Activated T-helper 1 cell treated with anti-CD3 and anti-CD28 coated beads, Interleukin-12 subunit alpha, Interleukin-12 subunit beta, Interleukin-2, Interleukin-4 antibody, amounts not matched to agents 30 ng/mL and 10 ng/mL and 1 ng/mL, durations not matched to agents 14 hours and 24 hours and 36 hours (primary cell): ENCODE measurements at regions of chr20 and their contacts with region 1.

Region 1: DNA sequence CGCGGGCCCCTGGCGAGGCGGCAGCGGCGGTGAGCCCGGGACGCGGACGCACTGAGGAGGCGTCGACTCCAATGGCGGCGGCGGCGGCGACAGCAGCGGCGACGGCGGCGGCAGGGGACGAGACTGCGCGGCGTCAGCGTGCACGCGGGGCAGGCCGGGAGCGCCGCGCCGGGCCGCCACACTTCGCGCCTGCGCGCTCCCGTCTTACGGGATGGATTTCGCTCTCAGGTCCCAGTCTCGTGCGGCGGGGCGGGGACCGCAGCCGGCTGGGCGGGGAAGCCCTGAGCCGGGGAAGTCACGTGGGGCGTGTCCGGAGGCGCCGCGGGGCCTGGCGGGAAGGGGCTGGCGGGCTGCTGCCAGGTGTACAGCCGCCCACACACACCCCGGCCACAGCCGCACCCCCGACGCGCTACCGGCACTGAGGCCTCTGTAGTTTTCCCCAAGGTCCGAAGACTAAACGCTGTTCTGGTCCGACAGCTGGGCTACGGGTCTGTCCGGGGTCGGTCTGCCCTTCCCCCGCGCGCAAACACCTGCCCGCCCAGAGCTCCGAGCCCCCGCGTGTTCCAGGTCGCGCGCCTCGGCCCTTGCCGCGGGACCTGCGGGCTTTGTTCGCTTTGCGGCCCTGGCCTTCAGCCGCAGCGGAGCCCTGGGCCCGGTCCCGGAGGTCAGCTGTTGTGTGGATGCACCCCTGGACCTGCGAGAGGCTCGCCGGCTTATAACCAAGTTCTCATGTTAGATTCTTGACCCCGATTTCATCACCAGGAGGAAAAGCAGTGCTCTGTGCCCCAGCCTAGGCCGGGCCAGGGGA is at the start of gene YTHDF1:
- DNase-seq: peak; percentile 97
- H3K4me3 Mint-ChIP-seq: peak within 1 kb of the TSS; percentile 98
- H3K27ac Mint-ChIP-seq: peak within 1 kb of the TSS; percentile 89
- H3K4me1 Mint-ChIP-seq: peaks cover 47% of the 10 kb centered on the region
- H3K27me3 Mint-ChIP-seq: no peaks in the 10 kb centered on the region
- total RNA-seq, gene YTHDF1: 48.8 and 49.0 TPM in 2 replicates

Region 2: GRCh38 chr20:63290677-63291472 is 74.6 kb after region 1 on chr20:
- intact Hi-C with region 1: loop called (anchors 5 kb)
- DNase-seq: peak; percentile 43
- H3K4me3 Mint-ChIP-seq: no peak overlapping the region
- H3K27ac Mint-ChIP-seq: no peak overlapping the region
- H3K4me1 Mint-ChIP-seq: no peaks in the 10 kb centered on the region
- H3K27me3 Mint-ChIP-seq: peaks cover 8% of the 10 kb centered on the region